Cardiac septum (tissue), 1 donor: ENCODE measurements at regions of chr10 and their contacts with region 1.

Region 1: DNA sequence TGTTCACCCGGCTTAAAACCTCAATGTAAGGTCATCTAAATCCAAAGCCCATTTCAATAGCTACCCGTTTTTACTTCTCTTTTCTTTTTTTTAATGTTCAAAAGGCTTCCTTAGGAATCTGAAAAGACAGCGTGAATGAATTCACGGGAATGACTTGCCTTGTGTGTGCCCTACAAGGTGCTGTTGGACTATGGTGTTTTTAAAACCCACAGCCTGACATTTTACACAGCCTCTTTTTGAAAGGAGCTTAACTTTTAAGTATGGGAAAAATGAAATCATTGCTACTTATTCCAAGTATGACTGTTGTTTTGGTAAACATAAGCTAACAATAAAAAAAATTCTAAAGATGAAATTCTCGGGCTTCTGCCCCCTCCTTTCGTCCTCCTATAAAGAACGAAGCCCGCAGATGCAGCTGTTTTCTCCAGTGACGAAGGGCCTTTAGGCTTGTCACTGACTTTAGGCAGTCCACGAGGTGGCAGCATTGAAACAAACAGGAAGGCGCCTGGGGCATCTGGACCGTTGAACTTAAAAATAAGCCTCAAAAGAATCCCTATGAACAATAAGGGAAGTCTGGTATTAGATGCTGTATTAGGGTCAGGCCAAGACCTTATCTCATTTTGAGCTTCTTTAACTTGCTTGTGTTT is 141.3 kb downstream of the NRP1 start:
- DNase-seq: peak; percentile 87

Region 2: DNA sequence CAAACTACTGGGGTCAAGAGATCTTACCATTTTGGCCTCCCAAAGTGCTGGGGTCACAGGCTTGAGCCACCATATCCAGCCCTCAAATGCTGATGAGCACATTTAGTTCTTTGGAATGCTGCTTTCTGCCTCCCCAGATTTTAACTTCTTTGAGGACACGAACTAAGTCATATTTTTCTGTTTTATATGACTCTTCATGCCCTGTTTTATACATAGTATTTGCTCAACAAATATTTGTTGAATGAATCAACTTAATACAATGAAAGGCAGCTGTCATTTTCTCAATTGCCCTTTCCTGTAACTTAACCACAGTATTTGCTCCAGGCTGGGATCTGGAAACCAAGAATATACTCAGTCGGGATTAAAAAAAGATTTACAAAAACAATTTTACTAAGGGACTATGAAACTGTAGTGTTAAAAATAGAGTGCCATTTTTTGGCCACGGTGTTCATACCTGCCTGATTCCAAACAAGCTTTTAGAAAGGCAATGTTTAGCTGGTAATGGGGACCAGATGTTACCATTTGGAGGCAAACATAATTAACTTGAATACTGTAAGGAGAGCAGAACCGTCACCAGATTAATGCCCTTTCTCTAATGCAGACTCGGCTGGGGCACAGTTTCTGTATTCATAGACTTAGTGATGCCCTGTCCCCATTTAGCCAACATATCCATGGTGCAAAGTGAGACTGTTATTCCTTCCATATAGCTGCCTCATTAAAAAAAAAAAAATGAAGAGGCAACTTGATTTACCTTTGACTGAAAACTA is 23.7 kb after region 1 on chr10:
- intact Hi-C with region 1: no loop called
- DNase-seq: no peak

Region 3: DNA sequence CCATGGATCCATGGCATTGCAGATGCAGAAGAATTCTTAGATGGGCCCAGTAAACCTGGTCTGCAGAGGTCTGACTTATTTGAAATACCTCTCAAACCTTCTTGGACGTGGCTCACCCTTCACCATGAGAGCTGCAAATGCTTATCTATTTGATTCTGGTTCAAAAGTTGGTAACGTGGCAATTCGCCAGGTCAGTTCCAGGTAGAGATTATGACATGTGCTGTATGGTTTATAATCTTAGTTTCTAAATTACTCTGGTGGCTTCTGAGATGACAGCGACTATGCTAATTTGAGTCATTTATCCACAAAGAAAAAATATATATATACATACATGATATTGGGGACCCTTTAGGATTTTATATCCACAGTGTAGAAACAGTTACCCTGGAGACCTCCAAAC is 72.4 kb after region 1 on chr10:
- intact Hi-C with region 1: loop called (anchors 5 kb)
- DNase-seq: no peak

Region 4: GRCh38 chr10:34637418-34637911 is 1444.3 kb after region 1 on chr10:
- intact Hi-C with region 1: loop called (anchors 10 kb)
- DNase-seq: no peak